HAP-1 (cell line): ENCODE measurements at regions of chr3 and their contacts with region 1.

Region 1: DNA sequence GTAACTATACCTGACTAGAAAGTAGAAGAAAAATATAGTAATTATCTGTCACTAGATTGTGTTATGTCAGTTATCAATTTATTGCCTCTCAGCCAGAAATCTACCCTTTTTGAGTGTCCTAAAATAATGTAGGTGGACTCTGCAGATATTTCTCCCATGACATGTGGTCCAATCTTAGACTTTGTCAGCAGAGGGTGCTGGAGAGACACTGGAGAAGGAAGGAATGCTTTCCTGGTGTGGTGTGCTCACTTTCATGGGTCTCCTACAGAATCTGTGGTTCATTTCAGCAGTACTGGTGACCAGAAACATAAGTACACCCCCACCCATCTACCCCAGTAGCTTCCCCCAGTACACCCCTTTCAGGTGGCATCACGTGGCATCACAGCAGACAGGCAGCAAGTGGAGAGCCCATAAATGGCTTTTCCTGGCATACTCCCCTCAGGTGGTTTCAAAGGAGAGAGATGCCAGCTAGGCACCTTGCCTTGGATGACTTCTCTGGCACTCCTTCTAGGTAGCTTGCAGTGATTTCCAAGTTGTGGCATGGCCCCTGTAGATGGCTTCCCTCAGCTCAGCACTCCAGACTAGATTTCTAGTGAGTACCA is 114.7 kb downstream of the GADL1 start:
- DNase-seq: peak; percentile 32 to 54
- H3K4me3 ChIP-seq: no peak overlapping the region
- H3K4me1 ChIP-seq: peaks cover 6% of the 10 kb centered on the region
- H3K27me3 ChIP-seq: no peaks in the 10 kb centered on the region

Region 2: GRCh38 chr3:30688776-30689641 is 90.8 kb before region 1 on chr3:
- in situ Hi-C with region 1: no loop called
- DNase-seq: no peak
- H3K4me3 ChIP-seq: no peak overlapping the region
- H3K4me1 ChIP-seq: peaks cover 18% of the 10 kb centered on the region
- H3K27me3 ChIP-seq: no peaks in the 10 kb centered on the region

Region 3: GRCh38 chr3:31132132-31132769 is 352.5 kb after region 1 on chr3:
- in situ Hi-C with region 1: loop called (anchors 10 kb)
- DNase-seq: no peak
- H3K4me3 ChIP-seq: no peak overlapping the region
- H3K4me1 ChIP-seq: peaks cover 19% of the 10 kb centered on the region
- H3K27me3 ChIP-seq: no peaks in the 10 kb centered on the region